Mammary epithelial cell (primary cell): ENCODE measurements at regions of chr11 and their contacts with region 1.

Region 1: GRCh38 chr11:83836883-83837654 is 550.9 kb upstream of the CCDC90B start:
- DNase-seq: peak; percentile 33
- H3K4me3 ChIP-seq: no peak overlapping the region
- H3K27ac ChIP-seq: no peak overlapping the region
- H3K4me1 ChIP-seq: no peaks in the 10 kb centered on the region
- H3K27me3 ChIP-seq: no peaks in the 10 kb centered on the region
- CTCF ChIP-seq: peak; percentile 61 to 84

Region 2: DNA sequence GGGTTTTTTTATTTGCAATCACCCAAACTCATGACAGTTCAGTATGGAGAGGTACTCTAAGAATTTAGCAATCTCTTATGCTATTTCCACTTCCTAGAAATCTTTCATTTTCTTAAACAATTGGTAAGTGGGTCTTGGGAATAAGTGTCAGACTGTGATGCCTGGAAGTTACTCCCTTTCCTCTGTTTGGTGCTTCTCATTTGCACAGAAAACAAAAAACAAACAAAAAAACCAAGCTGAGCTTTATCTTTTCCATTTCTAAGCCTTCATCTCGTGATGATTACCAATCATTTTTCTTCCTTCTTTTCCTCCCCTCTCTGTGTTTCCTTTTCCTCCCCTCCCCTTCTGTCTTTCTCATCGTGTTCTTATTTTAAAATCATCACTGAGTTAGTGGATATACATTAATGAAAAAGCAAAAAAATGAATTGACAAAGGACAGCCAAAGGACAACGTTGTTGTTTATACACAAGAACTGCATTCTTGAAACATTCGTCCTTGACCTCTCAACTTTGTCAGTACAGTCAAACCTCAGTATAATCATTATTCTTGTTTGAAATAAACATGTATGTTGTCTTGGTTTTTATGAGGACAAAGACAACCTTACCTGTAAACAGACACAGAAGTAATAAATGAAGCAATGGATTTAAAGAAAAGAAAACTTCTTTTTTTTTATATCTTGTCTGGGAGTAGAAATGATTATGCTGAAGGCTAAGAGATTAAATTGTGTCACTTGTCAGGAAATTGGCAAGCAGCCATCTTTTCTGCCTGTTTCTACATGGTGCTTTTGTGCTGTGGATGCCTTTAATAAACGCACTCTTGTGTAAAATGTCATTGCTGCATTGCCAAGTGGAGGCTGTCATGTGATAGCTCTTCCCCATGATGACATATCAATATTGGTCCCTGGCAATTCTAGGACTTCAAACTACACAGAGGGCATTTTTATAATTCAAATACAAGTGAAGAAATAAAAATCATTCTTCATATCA is 252.3 kb after region 1 on chr11:
- CTCF ChIA-PET with region 1: interaction called, 20 read pairs
- dilution Hi-C with region 1: no loop called
- in situ Hi-C with region 1: no loop called
- intact Hi-C with region 1: no loop called
- DNase-seq: no peak
- H3K4me3 ChIP-seq: no peak overlapping the region
- H3K27ac ChIP-seq: no peak overlapping the region
- H3K4me1 ChIP-seq: no peaks in the 10 kb centered on the region
- H3K27me3 ChIP-seq: no peaks in the 10 kb centered on the region
- CTCF ChIP-seq: no peak

Region 3: GRCh38 chr11:84384731-84385130 is 547.7 kb after region 1 on chr11:
- CTCF ChIA-PET with region 1: no interaction called
- dilution Hi-C with region 1: no loop called
- in situ Hi-C with region 1: loop called in 1 of 2 experiments (anchors 25 kb)
- intact Hi-C with region 1: loop called (anchors 2 kb)
- DNase-seq: peak; percentile 28
- H3K4me3 ChIP-seq: no peak overlapping the region
- H3K27ac ChIP-seq: no peak overlapping the region
- H3K4me1 ChIP-seq: no peaks in the 10 kb centered on the region
- H3K27me3 ChIP-seq: no peaks in the 10 kb centered on the region
- CTCF ChIP-seq: peak; percentile 81 to 87

Region 4: DNA sequence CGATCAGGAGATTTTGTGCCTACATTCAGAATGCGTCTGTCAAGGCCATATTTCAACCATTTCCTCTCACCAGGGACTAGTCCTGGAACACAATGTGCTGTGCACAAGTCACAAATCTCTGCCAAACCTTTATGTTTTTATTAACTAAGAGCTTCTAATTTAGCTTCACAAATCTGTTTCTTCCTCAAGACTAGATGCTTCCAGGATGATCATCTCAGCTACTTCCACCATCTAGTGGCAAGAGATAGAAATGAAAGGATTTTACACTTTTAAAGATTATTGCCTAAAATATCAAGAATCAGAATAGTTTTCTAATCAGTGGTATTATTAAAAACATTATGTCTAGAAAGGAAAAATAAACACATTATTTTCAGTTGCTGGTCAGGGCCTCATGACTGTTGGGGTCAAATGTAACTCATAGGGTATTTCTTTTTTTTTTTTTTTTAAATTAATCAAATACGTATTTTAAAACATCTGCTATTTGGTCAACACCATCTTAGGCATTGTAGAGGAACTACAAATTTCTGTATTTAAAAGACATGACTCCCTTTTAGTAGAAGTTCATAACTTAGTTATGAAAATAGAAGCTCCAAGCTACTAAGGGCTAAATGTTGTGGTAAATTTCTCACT is 687.5 kb after region 1 on chr11:
- CTCF ChIA-PET with region 1: no interaction called
- dilution Hi-C with region 1: no loop called
- in situ Hi-C with region 1: loop called (anchors 5 to 25 kb)
- intact Hi-C with region 1: loop called (anchors 2 kb)
- DNase-seq: no peak
- H3K4me3 ChIP-seq: no peak overlapping the region
- H3K27ac ChIP-seq: no peak overlapping the region
- H3K4me1 ChIP-seq: no peaks in the 10 kb centered on the region
- H3K27me3 ChIP-seq: no peaks in the 10 kb centered on the region
- CTCF ChIP-seq: peak; percentile 44 to 57

Region 5: GRCh38 chr11:84564180-84564866 is 727.3 kb after region 1 on chr11:
- CTCF ChIA-PET with region 1: interaction called, 4 read pairs
- dilution Hi-C with region 1: no loop called
- in situ Hi-C with region 1: no loop called
- intact Hi-C with region 1: loop called (anchors 2 kb)
- DNase-seq: peak; percentile 32
- H3K4me3 ChIP-seq: no peak overlapping the region
- H3K27ac ChIP-seq: no peak overlapping the region
- H3K4me1 ChIP-seq: no peaks in the 10 kb centered on the region
- H3K27me3 ChIP-seq: peaks cover 2% of the 10 kb centered on the region
- CTCF ChIP-seq: peak; percentile 82 to 83

Region 6: DNA sequence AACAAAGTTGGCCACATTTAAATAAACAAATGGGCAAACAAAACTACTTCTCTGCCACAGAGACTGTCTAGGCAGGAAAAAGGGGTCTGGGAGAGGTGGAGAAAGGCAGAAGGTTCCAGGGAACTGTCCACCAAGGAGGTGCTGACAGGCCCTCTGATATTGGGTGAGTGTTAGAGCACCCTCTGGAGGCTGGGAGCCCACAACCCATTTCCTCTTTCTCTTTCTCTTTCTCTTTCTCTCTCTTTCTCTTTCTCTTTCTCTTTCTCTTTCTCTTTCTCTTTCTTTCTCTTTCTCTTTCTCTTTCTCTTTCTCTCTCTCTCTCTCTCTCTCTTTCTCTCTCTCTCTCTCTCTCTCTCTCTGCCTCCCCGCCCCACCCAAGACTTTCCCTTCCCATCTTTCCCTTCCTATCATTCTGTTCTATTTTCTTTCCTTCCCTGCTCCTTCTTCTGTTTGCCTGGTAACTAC is 877.3 kb after region 1 on chr11:
- CTCF ChIA-PET with region 1: no interaction called
- dilution Hi-C with region 1: no loop called
- in situ Hi-C with region 1: no loop called
- intact Hi-C with region 1: loop called (anchors 5 kb)
- DNase-seq: peak; percentile 45
- H3K4me3 ChIP-seq: no peak overlapping the region
- H3K27ac ChIP-seq: no peak overlapping the region
- H3K4me1 ChIP-seq: no peaks in the 10 kb centered on the region
- H3K27me3 ChIP-seq: peaks cover 2% of the 10 kb centered on the region
- CTCF ChIP-seq: peak; percentile 53 to 74